Gastrocnemius medialis (tissue), 4 donors: ENCODE measurements at regions of chr10 and their contacts with region 1.

Region 1: GRCh38 chr10:130889240-130889639 is 422.3 kb downstream of the TCERG1L start:
- DNase-seq: no peak
- ATAC-seq: no peak
- H3K4me3 ChIP-seq: no peak overlapping the region
- H3K27ac ChIP-seq: no peak overlapping the region
- H3K4me1 ChIP-seq: no peaks in the 10 kb centered on the region
- H3K27me3 ChIP-seq: no peaks in the 10 kb centered on the region
- CTCF ChIP-seq: no peak
- POLR2A ChIP-seq: no peak

Region 2: GRCh38 chr10:130857631-130858295 is 31.5 kb before region 1 on chr10:
- in situ Hi-C with region 1: no loop called
- intact Hi-C with region 1: no loop called
- DNase-seq: no peak
- ATAC-seq: no peak
- H3K4me3 ChIP-seq: no peak overlapping the region
- H3K27ac ChIP-seq: no peak overlapping the region
- H3K4me1 ChIP-seq: no peaks in the 10 kb centered on the region
- H3K27me3 ChIP-seq: no peaks in the 10 kb centered on the region
- CTCF ChIP-seq: no peak
- POLR2A ChIP-seq: no peak

Region 3: GRCh38 chr10:130954326-130954905 is 65.2 kb after region 1 on chr10:
- in situ Hi-C with region 1: no loop called
- intact Hi-C with region 1: loop called (anchors 2 kb)
- DNase-seq: no peak
- ATAC-seq: no peak
- H3K4me3 ChIP-seq: no peak overlapping the region
- H3K27ac ChIP-seq: no peak overlapping the region
- H3K4me1 ChIP-seq: no peaks in the 10 kb centered on the region
- H3K27me3 ChIP-seq: no peaks in the 10 kb centered on the region
- CTCF ChIP-seq: no peak
- POLR2A ChIP-seq: no peak